GM12878 (cell line): ENCODE measurements at regions of chr7 and their contacts with region 1.

Region 1: GRCh38 chr7:8295638-8296361 is 33.8 kb upstream of the ICA1 start:
- DNase-seq: peak; percentile 43
- ATAC-seq: peak; percentile 99
- H3K4me3 ChIP-seq: no peak overlapping the region
- H3K27ac ChIP-seq: no peak overlapping the region
- H3K4me1 ChIP-seq: no peaks in the 10 kb centered on the region
- H3K27me3 ChIP-seq: no peaks in the 10 kb centered on the region
- CTCF ChIP-seq: peak; percentile 64 to 90 (median 75)
- EP300 ChIP-seq: no peak
- POLR2A ChIP-seq: no peak
- RAD21 ChIP-seq: peak; percentile 92

Region 2: DNA sequence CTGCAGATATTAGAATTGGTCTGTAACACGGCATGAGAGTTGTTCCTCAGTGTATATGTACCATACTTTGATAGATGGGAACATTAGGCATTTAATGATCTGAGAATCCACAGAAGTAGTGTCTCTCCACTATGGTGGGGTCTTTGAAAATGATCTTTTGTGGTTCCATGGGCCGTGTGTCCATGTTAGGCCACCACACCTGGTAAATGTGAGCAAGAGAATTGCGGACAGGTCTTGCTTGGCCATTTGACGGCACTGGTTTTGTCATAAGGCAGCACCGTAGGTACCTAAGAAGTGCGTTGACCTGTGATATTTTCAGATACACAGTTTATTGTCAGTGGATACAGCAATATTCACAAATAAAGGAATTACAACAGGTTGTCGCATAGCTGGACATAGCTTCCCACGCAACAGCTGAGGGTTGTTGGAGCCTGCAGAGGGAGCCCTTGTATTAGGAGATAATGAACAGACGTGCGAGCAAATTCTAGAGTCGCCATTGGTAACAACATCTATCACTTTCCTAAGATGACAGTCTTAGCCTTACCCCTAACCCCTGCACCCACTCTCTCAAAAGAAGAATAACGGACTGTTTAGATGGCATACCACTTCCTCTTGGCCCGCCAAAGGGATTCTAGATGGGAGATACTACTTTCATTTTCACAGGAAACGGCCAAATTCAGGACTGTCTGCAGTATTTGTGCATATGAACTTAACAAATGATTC is 871.5 kb before region 1 on chr7:
- CTCF ChIA-PET with region 1: interaction called, 31 read pairs
- POLR2A ChIA-PET with region 1: no interaction called
- RAD21 ChIA-PET with region 1: interaction called, 13 read pairs
- SMC1A ChIA-PET with region 1: interaction called, 4 read pairs
- in situ Hi-C with region 1: no loop called
- intact Hi-C with region 1: loop called (anchors 5 kb)
- DNase-seq: peak; percentile 37
- ATAC-seq: peak; percentile 92
- H3K4me3 ChIP-seq: peak overlapping the region; percentile 41
- H3K27ac ChIP-seq: no peak overlapping the region
- H3K4me1 ChIP-seq: no peaks in the 10 kb centered on the region
- H3K27me3 ChIP-seq: no peaks in the 10 kb centered on the region
- CTCF ChIP-seq: peak; percentile 66 to 75 (median 66)
- EP300 ChIP-seq: no peak
- POLR2A ChIP-seq: no peak
- RAD21 ChIP-seq: peak; percentile 76

Region 3: GRCh38 chr7:8042796-8043535 is 252.8 kb before region 1 on chr7:
- CTCF ChIA-PET with region 1: no interaction called
- POLR2A ChIA-PET with region 1: no interaction called
- RAD21 ChIA-PET with region 1: no interaction called
- SMC1A ChIA-PET with region 1: no interaction called
- in situ Hi-C with region 1: no loop called
- intact Hi-C with region 1: no loop called
- DNase-seq: no peak
- ATAC-seq: no peak
- H3K4me3 ChIP-seq: no peak overlapping the region
- H3K27ac ChIP-seq: no peak overlapping the region
- H3K4me1 ChIP-seq: no peaks in the 10 kb centered on the region
- H3K27me3 ChIP-seq: no peaks in the 10 kb centered on the region
- CTCF ChIP-seq: no peak
- EP300 ChIP-seq: no peak
- POLR2A ChIP-seq: no peak
- RAD21 ChIP-seq: no peak

Region 4: GRCh38 chr7:8277394-8277982 is 18.3 kb before region 1 on chr7:
- CTCF ChIA-PET with region 1: interaction called, 15 read pairs
- POLR2A ChIA-PET with region 1: no interaction called
- RAD21 ChIA-PET with region 1: interaction called, 8 read pairs
- SMC1A ChIA-PET with region 1: interaction called, 11 read pairs
- in situ Hi-C with region 1: no loop called
- intact Hi-C with region 1: no loop called
- DNase-seq: no peak
- ATAC-seq: peak; percentile 55
- H3K4me3 ChIP-seq: no peak overlapping the region
- H3K27ac ChIP-seq: no peak overlapping the region
- H3K4me1 ChIP-seq: no peaks in the 10 kb centered on the region
- H3K27me3 ChIP-seq: peaks cover 0 to 1% of the 10 kb centered on the region in 2 experiments; a peak in 2 of 4 replicates
- CTCF ChIP-seq: peak; percentile 11 to 30 (median 24); a peak in 4 of 6 replicates
- EP300 ChIP-seq: no peak
- POLR2A ChIP-seq: no peak
- RAD21 ChIP-seq: peak; percentile 43

Region 5: DNA sequence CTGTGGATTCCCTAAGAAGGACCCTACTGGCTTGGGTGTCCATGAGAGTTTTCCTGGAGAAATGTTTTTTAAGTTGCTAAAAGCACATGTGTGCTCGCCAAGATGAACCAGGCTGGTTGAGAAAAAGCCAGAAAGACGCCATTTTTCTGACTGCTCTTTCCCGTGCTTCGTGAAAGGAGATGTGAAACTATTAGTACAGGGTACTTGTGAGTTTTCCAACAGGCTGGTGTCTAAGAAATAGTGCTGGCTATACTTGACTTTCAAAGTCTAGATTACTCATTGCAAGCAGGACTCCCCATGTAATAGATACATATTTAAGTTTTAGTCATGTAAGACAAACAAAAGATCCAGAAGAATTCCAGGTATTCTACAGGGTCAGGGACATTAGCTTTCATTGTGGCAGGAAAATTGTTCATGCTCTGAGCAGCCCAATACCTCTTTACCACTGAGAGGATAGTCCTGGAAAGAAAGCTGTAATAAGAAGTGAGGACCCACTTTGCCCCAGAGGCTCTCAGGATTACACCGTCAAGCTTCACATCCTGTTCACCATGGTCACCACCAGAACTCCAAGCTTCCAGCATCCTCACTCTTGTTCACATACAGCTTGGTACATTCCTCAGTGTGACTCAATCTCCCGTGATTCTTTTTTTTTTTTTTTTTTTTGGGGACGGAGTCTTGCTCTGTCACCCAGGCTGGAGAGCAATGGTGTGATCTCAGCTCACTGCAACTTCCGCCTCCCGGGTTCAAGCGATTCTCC is 10.0 kb after region 1 on chr7:
- CTCF ChIA-PET with region 1: interaction called, 9 read pairs
- POLR2A ChIA-PET with region 1: no interaction called
- RAD21 ChIA-PET with region 1: interaction called, 4 read pairs
- SMC1A ChIA-PET with region 1: interaction called, 12 read pairs
- in situ Hi-C with region 1: no loop called
- intact Hi-C with region 1: no loop called
- DNase-seq: no peak
- ATAC-seq: no peak
- H3K4me3 ChIP-seq: no peak overlapping the region
- H3K27ac ChIP-seq: no peak overlapping the region
- H3K4me1 ChIP-seq: no peaks in the 10 kb centered on the region
- H3K27me3 ChIP-seq: no peaks in the 10 kb centered on the region
- CTCF ChIP-seq: no peak
- EP300 ChIP-seq: no peak
- POLR2A ChIP-seq: no peak
- RAD21 ChIP-seq: no peak

Region 6: GRCh38 chr7:8627325-8627724 is 331.5 kb after region 1 on chr7:
- CTCF ChIA-PET with region 1: no interaction called
- POLR2A ChIA-PET with region 1: no interaction called
- RAD21 ChIA-PET with region 1: no interaction called
- SMC1A ChIA-PET with region 1: no interaction called
- in situ Hi-C with region 1: no loop called
- intact Hi-C with region 1: no loop called
- DNase-seq: no peak
- ATAC-seq: no peak
- H3K4me3 ChIP-seq: no peak overlapping the region
- H3K27ac ChIP-seq: no peak overlapping the region
- H3K4me1 ChIP-seq: no peaks in the 10 kb centered on the region
- H3K27me3 ChIP-seq: no peaks in the 10 kb centered on the region
- CTCF ChIP-seq: no peak
- EP300 ChIP-seq: no peak
- POLR2A ChIP-seq: no peak
- RAD21 ChIP-seq: no peak